ENCODE measurements at regions of chrX and their contacts with region 1.

Region 1: DNA sequence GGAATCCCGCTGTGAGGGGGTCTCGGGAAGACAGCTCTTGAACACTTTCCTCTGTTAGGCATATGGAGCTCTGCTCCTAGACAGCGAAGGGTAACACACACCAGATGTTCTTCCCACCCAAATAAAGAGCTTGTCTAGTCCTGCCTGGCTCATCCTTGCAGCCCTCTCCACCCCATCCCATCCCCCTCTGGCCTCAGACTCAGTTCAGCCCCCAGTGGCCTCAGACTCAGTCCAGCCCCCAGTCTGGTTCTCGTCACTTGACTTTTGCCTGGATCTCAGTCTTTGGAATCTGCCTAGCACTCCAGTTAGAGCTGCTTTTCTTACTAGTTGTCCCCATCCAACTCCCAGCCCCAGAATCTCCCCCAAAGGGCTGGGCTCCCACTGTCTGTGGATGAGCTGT is 14.9 kb downstream of the RAB33A start:
- DNase-seq: no peak
- ATAC-seq: no peak
- H3K4me3 Mint-ChIP-seq: no peak overlapping the region
- H3K27ac Mint-ChIP-seq: no peak overlapping the region
- H3K4me1 Mint-ChIP-seq: peaks cover 13% of the 10 kb centered on the region
- H3K27me3 Mint-ChIP-seq: no peaks in the 10 kb centered on the region
- CTCF ChIP-seq: no peak

Region 2: GRCh38 chrX:130079824-130080406 is 106.7 kb before region 1 on chrX:
- CTCF ChIA-PET with region 1: interaction called, 80 read pairs
- POLR2A ChIA-PET with region 1: no interaction called
- intact Hi-C with region 1: loop called (anchors 1 kb)
- DNase-seq: no peak
- ATAC-seq: no peak
- H3K4me3 Mint-ChIP-seq: no peak overlapping the region
- H3K27ac Mint-ChIP-seq: peak overlapping the region; percentile 61
- H3K4me1 Mint-ChIP-seq: peaks cover 41% of the 10 kb centered on the region
- H3K27me3 Mint-ChIP-seq: no peaks in the 10 kb centered on the region
- CTCF ChIP-seq: no peak

Region 3: DNA sequence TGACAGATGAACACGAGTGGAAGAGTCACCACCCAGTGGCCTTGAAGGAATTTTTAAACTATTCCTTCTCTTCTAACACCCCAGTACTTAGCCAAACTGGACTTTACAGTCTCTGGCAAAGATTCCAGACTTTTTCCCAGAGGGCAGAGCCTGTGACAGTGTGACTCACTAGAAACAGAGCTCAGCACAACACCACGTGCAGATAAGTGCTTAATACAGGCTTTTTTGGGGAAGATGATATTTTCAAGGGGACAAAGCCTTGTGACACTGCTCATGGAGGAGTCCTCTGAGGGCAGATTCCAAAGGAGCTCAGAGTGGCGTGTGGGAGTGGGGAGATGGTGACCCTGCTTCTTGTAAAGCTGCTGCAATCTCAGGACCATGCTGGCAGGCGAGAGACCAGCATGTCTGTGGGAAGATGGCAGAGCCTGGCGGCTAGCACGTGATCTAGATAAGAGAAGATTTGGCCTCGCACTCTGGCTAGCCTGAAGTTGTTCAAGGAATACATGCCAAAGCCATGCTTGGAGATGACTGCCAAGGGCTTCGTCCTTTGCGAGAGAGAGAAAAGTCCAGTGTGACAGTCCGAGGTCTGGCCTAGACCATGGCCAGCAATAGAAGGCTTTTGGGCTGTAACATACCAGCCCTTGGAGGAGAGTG is 12.5 kb before region 1 on chrX:
- CTCF ChIA-PET with region 1: interaction called, 12 read pairs
- POLR2A ChIA-PET with region 1: interaction called, 4 read pairs
- intact Hi-C with region 1: no loop called
- DNase-seq: no peak
- ATAC-seq: no peak
- H3K4me3 Mint-ChIP-seq: peak overlapping the region; percentile 5
- H3K27ac Mint-ChIP-seq: peak overlapping the region; percentile 91
- H3K4me1 Mint-ChIP-seq: peaks cover 61% of the 10 kb centered on the region
- H3K27me3 Mint-ChIP-seq: no peaks in the 10 kb centered on the region
- CTCF ChIP-seq: no peak